Naive thymus-derived CD4-positive, alpha-beta T cell (primary cell): ENCODE measurements at regions of chr1 and their contacts with region 1.

Region 1: DNA sequence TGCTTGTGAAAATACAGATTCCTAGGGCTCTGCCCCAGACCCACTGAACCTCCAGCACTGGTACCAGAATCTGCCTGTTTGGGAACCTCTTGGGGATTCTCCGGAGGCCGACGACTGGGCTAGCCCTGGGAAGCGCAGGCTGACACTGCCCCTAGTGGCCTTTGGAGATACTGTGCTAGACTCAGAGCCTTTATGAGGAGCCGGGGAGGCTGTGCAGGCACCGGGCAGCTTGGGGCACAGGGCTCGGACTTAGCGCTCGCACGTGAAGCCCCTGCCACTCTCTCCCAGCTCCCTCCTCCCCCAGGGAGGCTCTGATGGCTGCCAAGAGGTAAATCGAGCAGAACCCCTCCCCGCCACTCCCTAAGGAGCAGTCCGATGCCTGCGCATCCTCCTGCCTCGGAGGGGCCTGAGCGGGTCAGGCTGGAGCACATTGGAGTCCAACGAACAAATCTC is 144.6 kb upstream of the TNR start:
- DNase-seq: peak in 2 of 9 donors; percentile 2
- ATAC-seq: peak; percentile 39
- H3K4me3 ChIP-seq: no peak overlapping the region
- H3K4me3 Mint-ChIP-seq: no peak overlapping the region
- H3K27ac ChIP-seq: no peak overlapping the region
- H3K27ac Mint-ChIP-seq: no peak overlapping the region
- H3K4me1 ChIP-seq: no peaks in the 10 kb centered on the region
- H3K4me1 Mint-ChIP-seq: peaks cover 0 to 6% (median 0%) of the 10 kb centered on the region in 7 donors
- H3K27me3 ChIP-seq: no peaks in the 10 kb centered on the region
- H3K27me3 Mint-ChIP-seq: peaks cover 0 to 10% (median 6%) of the 10 kb centered on the region in 5 donors

Region 2: DNA sequence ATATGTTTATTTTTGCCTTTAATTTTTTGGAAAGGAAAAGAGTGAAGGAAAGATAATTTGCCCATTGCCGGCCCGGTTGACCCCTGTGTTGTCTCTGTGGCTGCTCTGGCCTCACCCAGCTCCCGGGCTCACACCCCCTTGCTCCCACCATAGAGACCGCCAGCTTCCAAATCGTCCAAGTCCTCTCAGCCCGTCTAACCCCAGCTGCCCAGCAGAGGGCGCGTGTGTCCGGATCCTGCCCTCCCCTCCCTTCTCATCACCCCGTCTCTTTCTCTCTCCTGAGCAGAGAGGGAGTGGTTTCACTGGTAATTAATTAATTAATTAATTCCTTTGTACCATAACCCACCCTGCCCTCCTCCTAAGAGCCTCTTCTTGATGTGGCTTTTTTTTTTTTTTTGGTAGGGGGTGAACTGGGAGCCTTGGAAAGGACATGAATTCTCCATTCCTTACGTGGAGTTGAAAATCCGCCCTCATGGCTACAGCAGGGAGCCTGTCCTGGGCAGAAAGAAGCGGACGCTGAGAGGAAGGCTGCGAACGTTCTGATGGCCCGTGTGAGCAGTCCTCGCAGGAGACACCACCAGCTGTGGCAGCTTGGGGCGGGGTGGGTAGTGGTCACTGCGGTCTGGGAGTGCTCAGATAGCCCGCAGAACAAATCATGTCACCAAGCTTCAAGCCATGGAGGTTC is 741.3 kb before region 1 on chr1:
- CTCF ChIA-PET with region 1: no interaction called
- POLR2A ChIA-PET with region 1: no interaction called
- intact Hi-C with region 1: loop called in 1 of 2 experiments (anchors 5 kb)
- DNase-seq: peak; percentile 30 to 69 (median 54)
- ATAC-seq: peak; percentile 86
- H3K4me3 ChIP-seq: no peak overlapping the region
- H3K4me3 Mint-ChIP-seq: no peak overlapping the region
- H3K27ac ChIP-seq: no peak overlapping the region
- H3K27ac Mint-ChIP-seq: peak overlapping the region in 1 of 9 donors; percentile 2
- H3K4me1 ChIP-seq: no peaks in the 10 kb centered on the region
- H3K4me1 Mint-ChIP-seq: peaks cover 0 to 8% (median 2%) of the 10 kb centered on the region in 7 donors
- H3K27me3 ChIP-seq: no peaks in the 10 kb centered on the region
- H3K27me3 Mint-ChIP-seq: peaks cover 12 to 40% (median 18%) of the 10 kb centered on the region in 5 donors